T-cell (primary cell): ENCODE measurements at regions of chr10 and their contacts with region 1.

Region 1: GRCh38 chr10:60444494-60445064 is 54.9 kb upstream of the ANK3 start:
- DNase-seq: peak in 1 of 35 experiments; percentile 8
- ATAC-seq: no peak
- H3K4me3 ChIP-seq: no peak overlapping the region
- H3K4me3 Mint-ChIP-seq: no peak overlapping the region
- H3K27ac ChIP-seq: no peak overlapping the region
- H3K27ac Mint-ChIP-seq: no peak overlapping the region
- H3K4me1 ChIP-seq: peaks cover 0 to 9% of the 10 kb centered on the region in 2 experiments
- H3K4me1 Mint-ChIP-seq: peaks cover 17 to 20% (median 18%) of the 10 kb centered on the region in 3 donors
- H3K27me3 ChIP-seq: no peaks in the 10 kb centered on the region
- H3K27me3 Mint-ChIP-seq: no peaks in the 10 kb centered on the region

Region 2: GRCh38 chr10:60536529-60537114 is 92.0 kb after region 1 on chr10:
- CTCF ChIA-PET with region 1: no interaction called
- POLR2A ChIA-PET with region 1: no interaction called
- DNase-seq: no peak
- ATAC-seq: peak in 2 of 4 experiments; percentile 24 to 40
- H3K4me3 ChIP-seq: no peak overlapping the region
- H3K4me3 Mint-ChIP-seq: no peak overlapping the region
- H3K27ac ChIP-seq: no peak overlapping the region
- H3K27ac Mint-ChIP-seq: peak overlapping the region in 1 of 2 donors; percentile 2
- H3K4me1 ChIP-seq: no peaks in the 10 kb centered on the region
- H3K4me1 Mint-ChIP-seq: peaks cover 0 to 36% (median 21%) of the 10 kb centered on the region in 3 donors
- H3K27me3 ChIP-seq: no peaks in the 10 kb centered on the region
- H3K27me3 Mint-ChIP-seq: no peaks in the 10 kb centered on the region

Region 3: GRCh38 chr10:60549686-60550085 is 105.1 kb after region 1 on chr10:
- CTCF ChIA-PET with region 1: no interaction called
- POLR2A ChIA-PET with region 1: interaction called in 1 of 2 experiments, 12 read pairs
- DNase-seq: peak in 1 of 35 experiments; percentile 28
- ATAC-seq: no peak
- H3K4me3 ChIP-seq: no peak overlapping the region
- H3K4me3 Mint-ChIP-seq: no peak overlapping the region
- H3K27ac ChIP-seq: no peak overlapping the region
- H3K27ac Mint-ChIP-seq: no peak overlapping the region
- H3K4me1 ChIP-seq: no peaks in the 10 kb centered on the region
- H3K4me1 Mint-ChIP-seq: peaks cover 0 to 2% (median 1%) of the 10 kb centered on the region in 3 donors
- H3K27me3 ChIP-seq: no peaks in the 10 kb centered on the region
- H3K27me3 Mint-ChIP-seq: no peaks in the 10 kb centered on the region

Region 4: DNA sequence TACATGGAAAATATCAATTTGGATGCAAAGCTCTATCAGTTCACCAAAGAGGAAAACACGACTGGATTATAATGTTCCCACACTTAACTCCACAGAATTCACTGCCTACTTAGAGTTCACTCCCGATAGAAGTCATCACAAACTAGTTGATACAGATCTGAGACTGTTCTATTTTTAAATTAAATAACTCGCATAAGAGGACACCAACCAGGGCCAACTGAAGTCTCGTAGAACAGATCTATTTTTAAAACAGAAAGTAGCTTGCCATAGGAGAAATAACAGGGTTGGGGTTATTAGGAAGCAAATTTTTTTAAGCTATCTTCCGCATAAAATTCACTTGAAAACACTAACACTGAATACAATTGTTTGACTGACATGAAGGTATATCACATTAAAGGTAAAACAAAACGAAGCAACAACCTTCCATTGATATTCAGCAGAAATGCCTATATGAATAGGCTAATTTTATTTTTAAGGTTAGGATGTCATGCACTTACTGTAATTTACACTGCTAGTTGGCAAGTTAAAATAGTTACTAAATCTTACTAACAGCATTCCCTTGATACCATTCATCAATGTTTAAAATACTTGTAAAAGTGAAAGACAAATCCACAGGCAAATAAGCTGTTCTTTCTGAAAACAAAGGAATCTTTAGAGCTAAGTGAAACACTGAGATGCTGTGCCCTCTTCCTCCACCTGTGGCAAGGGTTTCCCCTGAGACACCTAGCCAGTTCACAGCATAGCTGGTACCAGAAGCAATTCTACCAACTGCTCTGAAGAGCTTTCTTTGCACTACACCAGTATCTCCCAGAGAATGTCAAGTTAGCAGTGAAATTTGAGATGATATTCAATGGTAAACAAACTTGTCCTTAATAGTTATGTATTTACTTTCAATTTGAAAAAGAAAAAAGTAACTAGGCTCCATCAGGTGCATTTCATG is 131.8 kb after region 1 on chr10:
- CTCF ChIA-PET with region 1: interaction called in 1 of 2 experiments, 5 read pairs
- POLR2A ChIA-PET with region 1: interaction called in 1 of 2 experiments, 10 read pairs
- DNase-seq: no peak
- ATAC-seq: peak in 1 of 4 experiments; percentile 46
- H3K4me3 ChIP-seq: no peak overlapping the region
- H3K4me3 Mint-ChIP-seq: no peak overlapping the region
- H3K27ac ChIP-seq: no peak overlapping the region
- H3K27ac Mint-ChIP-seq: no peak overlapping the region
- H3K4me1 ChIP-seq: peaks cover 0 to 2% of the 10 kb centered on the region in 2 experiments
- H3K4me1 Mint-ChIP-seq: peaks cover 32 to 49% (median 41%) of the 10 kb centered on the region in 3 donors
- H3K27me3 ChIP-seq: no peaks in the 10 kb centered on the region
- H3K27me3 Mint-ChIP-seq: peaks cover 0 to 1% of the 10 kb centered on the region in 2 donors